AG04450 (cell line): ENCODE measurements at regions of chr17 and their contacts with region 1.

Region 1: DNA sequence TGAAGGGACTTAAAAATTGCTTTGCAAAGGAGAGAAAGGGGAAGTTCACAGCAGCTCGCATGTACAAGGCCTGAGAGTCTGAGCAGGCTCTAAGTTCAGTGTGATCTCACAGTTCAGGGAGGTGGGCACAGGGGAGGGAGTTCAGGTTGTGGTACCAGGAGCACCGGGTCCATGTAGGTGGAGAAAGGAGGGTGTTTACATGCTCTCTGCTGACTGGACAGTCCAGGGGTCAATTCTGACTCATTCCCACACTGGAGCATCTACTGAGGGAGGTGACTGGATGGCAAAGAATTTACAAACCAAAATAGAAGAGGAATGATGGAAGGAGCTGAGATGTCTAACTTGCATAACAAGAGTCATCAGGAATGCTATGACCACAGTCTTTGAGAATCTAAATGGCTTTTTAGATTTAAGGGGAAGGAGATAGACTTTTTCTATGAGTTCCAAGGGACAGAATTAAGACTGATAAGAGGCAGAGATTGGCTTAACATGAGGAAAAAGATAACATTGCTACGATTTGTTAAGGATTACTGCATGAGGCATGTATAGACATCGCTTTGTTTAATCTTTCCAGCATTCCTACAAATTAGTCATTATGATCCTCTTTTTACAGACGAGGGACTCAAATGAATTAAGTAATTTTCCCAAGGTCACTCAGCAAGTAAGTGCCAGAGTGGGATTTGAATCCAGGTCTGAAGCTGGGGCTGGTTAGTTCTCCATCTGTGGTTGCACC is 29.9 kb downstream of the MIS12 start:
- DNase-seq: peak; percentile 97
- H3K4me3 ChIP-seq: no peak overlapping the region
- H3K27ac ChIP-seq: peak overlapping the region; percentile 95
- H3K27me3 ChIP-seq: no peaks in the 10 kb centered on the region
- CTCF ChIP-seq: no peak

Region 2: GRCh38 chr17:4852567-4853207 is 663.5 kb before region 1 on chr17:
- CTCF ChIA-PET with region 1: no interaction called
- POLR2A ChIA-PET with region 1: interaction called, 11 read pairs
- DNase-seq: peak; percentile 38
- H3K4me3 ChIP-seq: no peak overlapping the region
- H3K27ac ChIP-seq: peak overlapping the region; percentile 31
- H3K27me3 ChIP-seq: no peaks in the 10 kb centered on the region
- CTCF ChIP-seq: no peak

Region 3: GRCh38 chr17:5486204-5487124 is 29.8 kb before region 1 on chr17 and contains the start of gene MIS12:
- CTCF ChIA-PET with region 1: no interaction called
- POLR2A ChIA-PET with region 1: interaction called, 11 read pairs
- DNase-seq: peak; percentile 98
- H3K4me3 ChIP-seq: peak within 1 kb of the TSS; percentile 91
- H3K27ac ChIP-seq: peak within 1 kb of the TSS; percentile 99
- H3K27me3 ChIP-seq: no peaks in the 10 kb centered on the region
- CTCF ChIP-seq: no peak
- polyA plus RNA-seq, gene MIS12: 10.0 and 13.7 TPM in 2 replicates

Region 4: GRCh38 chr17:5500589-5501391 is 15.4 kb before region 1 on chr17:
- CTCF ChIA-PET with region 1: interaction called, 3 read pairs
- POLR2A ChIA-PET with region 1: interaction called, 16 read pairs
- DNase-seq: peak; percentile 88
- H3K4me3 ChIP-seq: peak overlapping the region; percentile 83
- H3K27ac ChIP-seq: peak overlapping the region; percentile 52
- H3K27me3 ChIP-seq: no peaks in the 10 kb centered on the region
- CTCF ChIP-seq: no peak

Region 5: GRCh38 chr17:5526821-5527598 is 10.8 kb after region 1 on chr17:
- CTCF ChIA-PET with region 1: no interaction called
- POLR2A ChIA-PET with region 1: interaction called, 12 read pairs
- DNase-seq: peak; percentile 91
- H3K4me3 ChIP-seq: no peak overlapping the region
- H3K27ac ChIP-seq: peak overlapping the region; percentile 81
- H3K27me3 ChIP-seq: no peaks in the 10 kb centered on the region
- CTCF ChIP-seq: no peak